Sciatic nerve (tissue), 2 donors: ENCODE measurements at regions of chr11 and their contacts with region 1.

Region 1: GRCh38 chr11:59918987-59919589 is 19.1 kb upstream of the OOSP1 start:
- DNase-seq: no peak
- ATAC-seq: no peak

Region 2: GRCh38 chr11:59822989-59823566 is 96.0 kb before region 1 on chr11:
- intact Hi-C with region 1: loop called (anchors 10 kb)
- DNase-seq: no peak
- ATAC-seq: peak; percentile 62